Heart left ventricle (tissue), 16 donors: ENCODE measurements at regions of chr2 and their contacts with region 1.

Region 1: DNA sequence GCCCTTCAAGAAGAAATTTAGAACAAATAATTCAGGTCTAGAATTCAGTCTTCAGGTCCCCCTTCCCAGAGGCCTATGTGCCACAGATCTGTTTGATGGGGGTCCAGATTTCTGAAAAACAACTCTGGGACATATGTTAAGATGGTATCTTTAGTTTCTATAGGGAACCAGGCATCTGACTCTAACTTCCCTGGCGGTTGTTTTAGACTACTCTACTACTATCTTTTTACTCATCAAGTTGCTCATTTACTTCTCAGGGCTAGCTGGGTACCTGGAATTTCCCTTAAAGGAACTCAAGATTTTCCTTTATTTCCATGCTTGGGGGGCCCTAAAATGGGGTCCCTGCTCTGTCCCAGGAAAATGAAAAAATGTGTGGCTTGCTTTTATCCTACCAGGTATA is 114.7 kb upstream of the RAB6C start:
- DNase-seq: no peak
- ATAC-seq: no peak
- H3K4me3 ChIP-seq: no peak overlapping the region
- H3K27ac ChIP-seq: no peak overlapping the region
- H3K4me1 ChIP-seq: no peaks in the 10 kb centered on the region
- H3K27me3 ChIP-seq: no peaks in the 10 kb centered on the region
- CTCF ChIP-seq: no peak
- POLR2A ChIP-seq: no peak

Region 2: DNA sequence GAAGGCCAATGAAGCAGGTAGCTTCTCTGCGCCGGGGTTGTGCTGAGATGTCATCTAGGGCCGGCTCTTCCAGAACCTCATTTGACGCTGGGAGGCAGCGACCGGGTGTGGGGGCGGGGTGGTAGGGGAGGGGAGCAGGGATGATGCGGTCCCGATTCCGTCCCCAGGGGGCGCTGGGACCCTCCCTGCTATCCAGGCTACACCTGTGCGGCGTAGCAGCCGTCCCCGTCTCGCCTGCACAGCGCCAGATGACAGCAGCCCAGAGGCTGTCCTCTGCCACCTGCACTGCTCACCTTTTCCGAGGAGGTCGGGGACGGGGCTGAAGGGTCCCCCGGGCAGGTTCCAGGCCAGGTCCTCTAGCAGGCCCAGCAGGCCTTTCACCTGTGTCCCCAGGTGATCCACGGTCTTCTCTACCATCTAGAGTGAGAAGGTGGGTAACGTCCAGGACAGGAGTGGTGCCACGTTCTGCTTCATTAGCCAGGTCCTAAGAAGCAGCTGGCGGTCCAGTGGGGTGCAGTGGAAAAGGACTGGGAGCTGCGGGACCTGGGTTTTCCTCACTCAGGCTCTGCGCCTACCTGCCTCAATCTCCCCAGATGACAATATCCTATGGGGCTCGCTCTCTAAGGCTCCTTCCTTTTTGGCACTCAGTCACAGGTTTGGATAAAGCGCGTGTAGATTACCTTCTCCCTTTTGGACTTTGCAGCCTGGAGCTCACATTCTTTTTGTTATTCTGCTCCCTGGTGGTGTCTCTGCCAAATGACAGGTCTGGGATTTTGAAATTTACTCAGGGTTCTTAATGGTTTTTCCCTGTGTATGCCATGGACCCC is 58.8 kb after region 1 on chr2:
- intact Hi-C with region 1: loop called in 1 of 10 experiments (anchors 5 kb)
- DNase-seq: no peak
- ATAC-seq: peak; percentile 54 to 74 (median 64)
- H3K4me3 ChIP-seq: no peak overlapping the region
- H3K27ac ChIP-seq: no peak overlapping the region
- H3K4me1 ChIP-seq: peaks cover 0 to 11% (median 3%) of the 10 kb centered on the region in 12 donors
- H3K27me3 ChIP-seq: peaks cover 4 to 39% (median 15%) of the 10 kb centered on the region in 9 donors
- CTCF ChIP-seq: peak; percentile 22 to 59 (median 48)
- POLR2A ChIP-seq: no peak